ENCODE measurements at regions of chr21 and their contacts with region 1.

Region 1: DNA sequence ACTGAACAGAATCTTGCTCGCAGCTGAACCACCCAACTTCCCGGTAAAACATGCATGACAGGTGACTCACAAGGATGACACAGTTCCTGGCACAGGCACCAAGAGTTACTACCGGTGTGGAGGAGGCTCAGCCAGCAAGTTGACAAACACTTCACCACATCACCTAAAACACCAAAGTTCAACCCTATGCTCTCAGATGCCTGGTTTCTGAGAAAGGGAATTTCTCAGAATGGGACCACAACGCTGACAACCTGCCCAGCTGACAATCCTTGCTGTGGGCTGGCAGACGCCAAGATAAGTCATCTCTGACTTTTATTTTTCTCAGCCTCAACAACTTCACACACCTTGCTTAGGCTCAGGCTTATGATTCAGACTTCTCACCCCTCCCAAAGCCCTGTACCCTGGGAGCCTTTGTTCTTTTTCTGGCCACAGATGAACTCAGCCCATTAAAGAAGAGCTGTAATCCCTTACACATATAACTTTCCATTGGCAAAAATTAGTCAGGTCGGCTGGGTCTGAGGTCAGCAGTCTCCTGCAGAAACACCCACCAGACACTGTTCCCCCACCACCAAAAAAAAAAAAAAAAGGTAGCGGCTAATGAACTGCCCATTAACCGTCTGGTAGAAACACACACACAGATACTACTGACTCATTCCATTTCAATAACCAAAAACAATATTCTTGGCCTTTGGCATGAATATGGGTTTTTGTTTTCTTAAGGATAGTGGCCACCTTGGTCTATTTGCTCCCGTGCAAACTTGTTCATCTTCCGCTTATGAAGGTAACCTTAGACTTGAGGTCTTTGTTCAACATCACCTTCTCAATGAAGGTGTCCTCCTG is 10.8 kb upstream of the TIAM1 start:
- DNase-seq: peak; percentile 66 to 93
- H3K4me3 ChIP-seq: no peak overlapping the region; the same call in 1 of the 2 replicates
- H3K27ac ChIP-seq: peak overlapping the region; percentile 99
- H3K4me1 ChIP-seq: peaks cover 78% of the 10 kb centered on the region
- H3K27me3 ChIP-seq: no peaks in the 10 kb centered on the region
- CTCF ChIP-seq: no peak

Region 2: DNA sequence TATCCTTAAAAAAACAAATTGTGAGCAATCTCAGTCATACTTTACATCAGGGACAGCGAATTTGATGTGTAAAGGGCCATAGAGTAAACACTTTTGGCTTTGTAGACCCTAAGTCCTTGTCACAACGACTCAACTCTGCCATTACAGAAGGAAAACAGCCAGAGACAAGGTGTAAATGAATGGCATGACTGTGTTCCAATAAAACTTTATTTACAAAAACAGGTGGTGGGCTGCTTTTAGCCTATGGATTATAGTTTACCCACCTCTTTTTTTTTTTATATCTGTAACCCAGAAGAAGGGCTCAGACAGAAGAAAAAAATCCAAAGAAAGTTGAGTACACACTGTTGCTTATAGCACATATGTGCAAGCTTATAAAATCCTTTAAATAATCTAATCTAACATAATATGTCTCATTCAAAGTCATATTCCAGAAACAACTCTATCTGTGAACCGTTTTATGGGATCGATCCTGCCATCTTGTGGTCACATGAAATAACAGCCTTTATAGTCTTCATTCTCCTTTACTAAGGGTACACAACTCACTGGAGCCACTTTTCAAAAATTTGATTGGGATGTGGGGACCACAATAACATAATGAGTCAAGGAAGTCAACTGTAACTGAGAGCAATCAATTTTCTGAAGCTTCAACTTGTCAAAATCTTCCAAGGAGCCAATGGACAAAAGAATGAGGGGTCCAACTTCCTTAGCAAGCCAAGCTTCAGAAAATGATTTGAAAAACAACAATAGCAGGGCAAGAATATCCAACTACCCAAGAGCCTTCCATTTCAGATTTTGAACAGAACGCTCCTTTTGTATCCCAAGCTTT is 174.4 kb before region 1 on chr21:
- CTCF ChIA-PET with region 1: no interaction called
- POLR2A ChIA-PET with region 1: no interaction called
- intact Hi-C with region 1: no loop called
- DNase-seq: no peak
- H3K4me3 ChIP-seq: no peak overlapping the region
- H3K27ac ChIP-seq: no peak overlapping the region
- H3K4me1 ChIP-seq: no peaks in the 10 kb centered on the region
- H3K27me3 ChIP-seq: no peaks in the 10 kb centered on the region
- CTCF ChIP-seq: peak; percentile 60

Region 3: GRCh38 chr21:31218830-31219608 is 135.8 kb before region 1 on chr21:
- CTCF ChIA-PET with region 1: no interaction called
- POLR2A ChIA-PET with region 1: no interaction called
- intact Hi-C with region 1: loop called (anchors 1 kb)
- DNase-seq: peak; percentile 69 to 89
- H3K4me3 ChIP-seq: peak overlapping the region; percentile 6; the same call in 1 of the 2 replicates
- H3K27ac ChIP-seq: peak overlapping the region; percentile 82
- H3K4me1 ChIP-seq: peaks cover 24% of the 10 kb centered on the region
- H3K27me3 ChIP-seq: no peaks in the 10 kb centered on the region
- CTCF ChIP-seq: no peak

Region 4: GRCh38 chr21:31366825-31367224 is 12.0 kb after region 1 on chr21:
- CTCF ChIA-PET with region 1: no interaction called
- POLR2A ChIA-PET with region 1: no interaction called
- intact Hi-C with region 1: loop called (anchors 1 kb)
- DNase-seq: peak; percentile 66 to 95
- H3K4me3 ChIP-seq: no peak overlapping the region
- H3K27ac ChIP-seq: peak overlapping the region; percentile 92
- H3K4me1 ChIP-seq: peaks cover 32% of the 10 kb centered on the region
- H3K27me3 ChIP-seq: no peaks in the 10 kb centered on the region
- CTCF ChIP-seq: no peak

Region 5: DNA sequence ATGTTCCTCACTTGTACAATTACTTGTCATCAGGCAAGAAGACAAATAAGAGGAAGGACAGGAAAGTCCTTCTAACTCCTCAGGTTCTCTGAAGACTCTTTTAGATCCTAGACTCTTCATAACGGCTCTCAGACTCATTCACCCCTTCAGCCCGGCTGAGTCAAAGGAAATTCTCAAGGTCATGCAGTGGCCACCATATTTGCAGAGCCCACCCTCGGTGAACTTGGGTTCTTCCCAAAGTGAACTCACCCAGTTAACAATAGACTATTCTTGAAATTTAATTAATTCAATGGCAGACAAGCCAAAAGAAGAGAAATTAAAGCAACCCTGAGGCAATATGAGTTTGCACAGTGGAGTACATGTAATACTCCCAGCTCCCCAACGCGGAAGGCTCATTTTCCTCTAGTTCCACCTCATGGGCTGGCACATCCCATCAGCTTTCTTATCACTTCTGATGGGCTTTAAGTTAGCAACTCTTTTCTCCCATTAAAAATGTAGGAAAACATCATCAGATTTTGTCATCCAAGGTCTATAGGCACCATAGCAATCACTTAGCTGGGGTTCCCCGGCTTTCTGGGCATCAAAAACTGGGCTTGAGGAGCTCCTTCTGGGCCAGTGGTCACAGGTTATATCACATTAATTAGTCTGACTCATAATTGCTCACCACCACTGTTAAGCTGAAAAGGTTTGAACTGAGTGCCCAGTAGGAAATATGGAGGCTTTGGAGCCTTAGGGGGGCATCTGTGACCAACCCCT is 17.1 kb after region 1 on chr21:
- CTCF ChIA-PET with region 1: no interaction called
- POLR2A ChIA-PET with region 1: interaction called, 15 read pairs
- intact Hi-C with region 1: no loop called
- DNase-seq: peak in 1 of 2 experiments; percentile 47
- H3K4me3 ChIP-seq: no peak overlapping the region
- H3K27ac ChIP-seq: 0 out of 2 replicates have a peak overlapping the region, but pooled peaks have one; percentile 16
- H3K4me1 ChIP-seq: peaks cover 21% of the 10 kb centered on the region
- H3K27me3 ChIP-seq: no peaks in the 10 kb centered on the region
- CTCF ChIP-seq: no peak

Region 6: DNA sequence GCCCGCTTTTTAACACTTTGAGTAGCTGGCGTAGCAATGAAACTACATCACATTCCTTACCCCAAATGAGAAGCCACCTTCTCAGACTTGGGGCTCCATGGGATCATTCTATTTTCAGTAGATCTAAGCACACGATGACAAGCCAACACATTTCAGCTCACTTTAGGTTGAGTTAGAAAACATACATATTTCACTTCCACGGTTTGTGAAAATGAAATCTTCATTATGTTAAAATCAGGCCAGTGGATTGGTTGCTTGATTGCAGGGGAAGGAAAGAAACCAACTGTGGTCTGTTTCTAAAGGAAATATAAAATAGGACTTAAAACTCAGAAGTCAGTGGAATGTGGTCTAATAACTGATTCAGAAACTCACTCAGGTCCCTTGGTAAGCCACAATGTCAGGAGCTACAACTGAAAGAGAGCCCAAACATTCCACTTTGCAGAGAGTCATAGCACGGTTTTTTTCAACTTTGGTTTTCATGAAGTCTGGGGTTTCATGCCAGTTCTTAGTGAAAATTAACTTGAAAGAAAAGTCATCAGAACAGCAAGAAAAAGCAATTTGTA is 71.5 kb after region 1 on chr21:
- CTCF ChIA-PET with region 1: no interaction called
- POLR2A ChIA-PET with region 1: no interaction called
- intact Hi-C with region 1: no loop called
- DNase-seq: no peak
- H3K4me3 ChIP-seq: no peak overlapping the region
- H3K27ac ChIP-seq: no peak overlapping the region
- H3K4me1 ChIP-seq: no peaks in the 10 kb centered on the region
- H3K27me3 ChIP-seq: no peaks in the 10 kb centered on the region
- CTCF ChIP-seq: no peak

Region 7: DNA sequence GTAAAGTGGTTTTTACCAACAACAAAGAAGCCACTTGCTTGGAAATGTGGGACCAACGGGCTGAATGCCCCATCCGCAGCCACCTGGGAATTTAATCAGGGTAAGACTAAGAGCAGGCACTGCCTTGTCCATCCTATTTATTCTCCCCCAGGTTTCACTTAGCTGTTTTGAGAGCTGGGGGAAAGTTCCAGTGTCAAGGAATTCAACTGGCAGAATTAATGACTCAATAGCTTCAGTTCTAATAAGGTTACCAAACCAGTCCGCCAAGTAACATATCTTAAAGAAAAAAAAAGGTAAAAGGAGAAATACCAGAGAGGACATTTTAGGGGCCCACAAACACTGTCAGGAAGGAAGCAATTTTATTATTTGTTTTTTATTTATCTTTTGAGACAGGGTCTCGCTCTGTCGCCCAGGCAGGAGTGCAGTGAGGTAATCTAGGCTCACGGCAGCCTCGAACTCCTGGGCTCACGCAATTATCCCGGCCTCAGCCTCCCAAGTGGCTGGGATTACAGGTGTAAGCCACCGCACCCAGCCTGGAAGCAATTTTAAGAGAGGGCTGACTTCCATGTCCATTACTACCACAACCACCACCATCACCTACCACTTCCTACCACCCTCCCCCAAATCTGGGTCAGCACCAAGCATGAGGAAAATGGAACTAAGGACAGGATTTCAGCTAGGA is 147.2 kb after region 1 on chr21:
- CTCF ChIA-PET with region 1: no interaction called
- POLR2A ChIA-PET with region 1: no interaction called
- intact Hi-C with region 1: loop called (anchors 1 kb)
- DNase-seq: peak; percentile 33 to 89
- H3K4me3 ChIP-seq: peak overlapping the region; percentile 50; the same call in 1 of the 2 replicates
- H3K27ac ChIP-seq: peak overlapping the region; percentile 100
- H3K4me1 ChIP-seq: peaks cover 31% of the 10 kb centered on the region
- H3K27me3 ChIP-seq: no peaks in the 10 kb centered on the region
- CTCF ChIP-seq: no peak

Region 8: GRCh38 chr21:31929548-31929947 is 574.7 kb after region 1 on chr21:
- CTCF ChIA-PET with region 1: no interaction called
- POLR2A ChIA-PET with region 1: no interaction called
- intact Hi-C with region 1: no loop called
- DNase-seq: no peak
- H3K4me3 ChIP-seq: no peak overlapping the region
- H3K27ac ChIP-seq: no peak overlapping the region
- H3K4me1 ChIP-seq: no peaks in the 10 kb centered on the region
- H3K27me3 ChIP-seq: peaks cover 23% of the 10 kb centered on the region
- CTCF ChIP-seq: no peak